Thyroid gland (tissue), 4 donors: ENCODE measurements at regions of chr15 and their contacts with region 1.

Region 1: GRCh38 chr15:65384895-65385858 is 7.4 kb upstream of the IGDCC3 start:
- DNase-seq: peak; percentile 87 to 89
- H3K4me3 ChIP-seq: peak overlapping the region in 1 of 3 donors; percentile 12
- H3K27ac ChIP-seq: peak overlapping the region in 2 of 3 donors; percentile 16 to 38
- H3K4me1 ChIP-seq: peaks cover 9 to 16% of the 10 kb centered on the region in 2 donors
- H3K27me3 ChIP-seq: no peaks in the 10 kb centered on the region
- CTCF ChIP-seq: peak; percentile 66 to 93 (median 90)
- POLR2A ChIP-seq: no peak

Region 2: GRCh38 chr15:65318870-65319356 is 66.3 kb before region 1 on chr15:
- intact Hi-C with region 1: loop called (anchors 2 kb)
- DNase-seq: peak; percentile 76 to 82
- H3K4me3 ChIP-seq: no peak overlapping the region
- H3K27ac ChIP-seq: no peak overlapping the region
- H3K4me1 ChIP-seq: peaks cover 0 to 7% of the 10 kb centered on the region in 2 donors
- H3K27me3 ChIP-seq: no peaks in the 10 kb centered on the region
- CTCF ChIP-seq: peak; percentile 78 to 97 (median 91)
- POLR2A ChIP-seq: no peak

Region 3: GRCh38 chr15:65655026-65655425 is 269.8 kb after region 1 on chr15:
- intact Hi-C with region 1: no loop called
- DNase-seq: no peak
- H3K4me3 ChIP-seq: no peak overlapping the region
- H3K27ac ChIP-seq: no peak overlapping the region
- H3K4me1 ChIP-seq: peaks cover 0 to 10% of the 10 kb centered on the region in 2 donors
- H3K27me3 ChIP-seq: no peaks in the 10 kb centered on the region
- CTCF ChIP-seq: no peak
- POLR2A ChIP-seq: no peak